ENCODE measurements at regions of chr17 and their contacts with region 1.

Region 1: GRCh38 chr17:3913531-3914311 is 2.5 kb downstream of the P2RX1 start:
- DNase-seq: peak; percentile 93
- ATAC-seq: peak; percentile 57
- H3K4me3 ChIP-seq: peak overlapping the region; percentile 48 to 72 (median 57)
- H3K4me3 Mint-ChIP-seq: peak overlapping the region; percentile 90
- H3K27ac ChIP-seq: peak overlapping the region; percentile 100
- H3K27ac Mint-ChIP-seq: peak overlapping the region; percentile 98
- H3K4me1 ChIP-seq: peaks cover 72 to 92% of the 10 kb centered on the region in 2 donors
- H3K4me1 Mint-ChIP-seq: peaks cover 80% of the 10 kb centered on the region
- H3K27me3 ChIP-seq: no peaks in the 10 kb centered on the region
- H3K27me3 Mint-ChIP-seq: no peaks in the 10 kb centered on the region
- CTCF ChIP-seq: peak; percentile 97

Region 2: DNA sequence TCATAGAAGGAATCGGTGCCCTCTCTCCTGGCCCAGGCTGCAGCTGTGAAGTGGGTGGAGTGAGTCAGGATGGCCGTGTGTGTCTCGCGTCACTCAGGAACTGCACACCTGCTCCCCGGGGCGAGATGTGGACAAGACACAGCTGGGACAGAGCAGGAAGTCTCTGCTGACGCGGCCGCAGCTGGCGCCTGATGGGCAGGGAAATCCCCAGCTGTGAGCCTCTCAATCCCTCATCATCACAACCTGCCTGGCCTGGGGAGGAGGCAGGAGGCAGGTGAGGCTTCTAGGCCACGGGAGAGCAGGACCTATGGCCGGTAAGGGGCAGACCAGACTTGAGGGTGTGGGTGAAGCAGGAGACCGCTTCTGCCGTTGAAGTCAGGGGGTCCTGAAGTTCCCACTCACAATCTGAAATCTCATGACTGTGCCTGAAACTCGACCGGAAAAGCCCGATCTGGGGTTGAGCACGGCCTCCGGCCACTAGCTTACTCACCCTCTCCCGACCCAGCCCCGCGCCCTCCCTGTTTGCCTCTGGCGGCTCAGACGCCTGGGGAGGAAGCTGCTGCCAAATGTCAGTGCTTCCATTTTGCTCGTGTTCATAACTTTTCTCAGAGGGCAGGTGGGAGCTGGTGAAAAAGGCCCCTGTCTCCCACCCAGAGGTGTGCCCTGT is 355.0 kb before region 1 on chr17:
- CTCF ChIA-PET with region 1: no interaction called
- POLR2A ChIA-PET with region 1: no interaction called
- intact Hi-C with region 1: loop called (anchors 10 kb)
- DNase-seq: peak; percentile 89
- ATAC-seq: peak; percentile 76
- H3K4me3 ChIP-seq: no peak overlapping the region
- H3K4me3 Mint-ChIP-seq: peak overlapping the region; percentile 77
- H3K27ac ChIP-seq: peak overlapping the region; percentile 73 to 81
- H3K27ac Mint-ChIP-seq: peak overlapping the region; percentile 95
- H3K4me1 ChIP-seq: peaks cover 28 to 40% of the 10 kb centered on the region in 2 donors
- H3K4me1 Mint-ChIP-seq: peaks cover 46% of the 10 kb centered on the region
- H3K27me3 ChIP-seq: peaks cover 0 to 9% (median 0%) of the 10 kb centered on the region in 4 experiments
- H3K27me3 Mint-ChIP-seq: peaks cover 3% of the 10 kb centered on the region
- CTCF ChIP-seq: no peak

Region 3: GRCh38 chr17:3762922-3763776 is 150.6 kb before region 1 on chr17:
- CTCF ChIA-PET with region 1: no interaction called
- POLR2A ChIA-PET with region 1: no interaction called
- intact Hi-C with region 1: loop called (anchors 1 kb)
- DNase-seq: no peak
- ATAC-seq: peak; percentile 43
- H3K4me3 ChIP-seq: no peak overlapping the region
- H3K4me3 Mint-ChIP-seq: peak overlapping the region; percentile 59
- H3K27ac ChIP-seq: no peak overlapping the region
- H3K27ac Mint-ChIP-seq: peak overlapping the region; percentile 88
- H3K4me1 ChIP-seq: peaks cover 10 to 22% of the 10 kb centered on the region in 2 donors
- H3K4me1 Mint-ChIP-seq: peaks cover 20% of the 10 kb centered on the region
- H3K27me3 ChIP-seq: no peaks in the 10 kb centered on the region
- H3K27me3 Mint-ChIP-seq: no peaks in the 10 kb centered on the region
- CTCF ChIP-seq: no peak

Region 4: GRCh38 chr17:3865176-3865575 is 48.5 kb before region 1 on chr17:
- CTCF ChIA-PET with region 1: interaction called, 53 read pairs
- POLR2A ChIA-PET with region 1: interaction called, 3 read pairs
- intact Hi-C with region 1: loop called (anchors 2 kb)
- DNase-seq: no peak
- ATAC-seq: no peak
- H3K4me3 ChIP-seq: no peak overlapping the region
- H3K4me3 Mint-ChIP-seq: no peak overlapping the region
- H3K27ac ChIP-seq: no peak overlapping the region
- H3K27ac Mint-ChIP-seq: no peak overlapping the region
- H3K4me1 ChIP-seq: no peaks in the 10 kb centered on the region
- H3K4me1 Mint-ChIP-seq: no peaks in the 10 kb centered on the region
- H3K27me3 ChIP-seq: no peaks in the 10 kb centered on the region
- H3K27me3 Mint-ChIP-seq: no peaks in the 10 kb centered on the region
- CTCF ChIP-seq: no peak

Region 5: GRCh38 chr17:3935140-3935542 is 21.4 kb after region 1 on chr17:
- CTCF ChIA-PET with region 1: interaction called, 29 read pairs
- POLR2A ChIA-PET with region 1: interaction called, 10 read pairs
- intact Hi-C with region 1: no loop called
- DNase-seq: peak; percentile 72
- ATAC-seq: peak; percentile 61
- H3K4me3 ChIP-seq: no peak overlapping the region
- H3K4me3 Mint-ChIP-seq: no peak overlapping the region
- H3K27ac ChIP-seq: peak overlapping the region in 1 of 2 donors; percentile 30
- H3K27ac Mint-ChIP-seq: peak overlapping the region; percentile 61
- H3K4me1 ChIP-seq: no peaks in the 10 kb centered on the region
- H3K4me1 Mint-ChIP-seq: no peaks in the 10 kb centered on the region
- H3K27me3 ChIP-seq: no peaks in the 10 kb centered on the region
- H3K27me3 Mint-ChIP-seq: no peaks in the 10 kb centered on the region
- CTCF ChIP-seq: peak; percentile 57

Region 6: DNA sequence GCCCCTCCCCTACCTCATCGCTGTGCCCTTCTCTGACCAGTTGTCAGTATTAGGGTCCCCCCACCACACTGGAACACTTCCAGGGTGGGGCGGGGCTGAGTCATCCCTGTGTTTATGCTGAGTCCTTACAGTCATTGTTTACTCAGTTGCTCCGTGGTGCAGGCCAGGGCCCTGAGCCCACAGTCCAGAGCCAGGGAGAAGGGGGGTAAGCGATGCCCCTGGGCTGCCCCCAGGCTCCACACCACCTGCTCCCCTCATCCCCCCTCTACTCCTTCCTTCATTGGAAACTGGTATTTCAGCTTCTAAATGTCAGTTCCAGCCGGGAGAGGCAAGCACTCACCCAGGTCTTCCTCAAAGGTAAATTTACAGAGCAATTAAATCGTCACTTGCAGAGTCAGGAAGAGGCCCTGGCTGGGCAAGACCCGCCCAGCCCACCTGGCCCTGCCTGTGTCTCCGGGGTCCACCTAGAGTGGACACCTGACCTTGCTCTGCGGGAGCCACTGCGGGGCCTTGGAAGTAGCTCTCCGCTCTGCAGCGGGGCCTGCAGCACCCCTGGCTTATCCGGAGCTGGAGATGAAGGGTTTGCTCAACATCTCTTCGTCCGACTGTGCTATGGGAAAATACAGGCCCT is 45.7 kb after region 1 on chr17:
- CTCF ChIA-PET with region 1: interaction called, 157 read pairs
- POLR2A ChIA-PET with region 1: interaction called, 64 read pairs
- intact Hi-C with region 1: loop called (anchors 1 kb)
- DNase-seq: no peak
- ATAC-seq: no peak
- H3K4me3 ChIP-seq: no peak overlapping the region
- H3K4me3 Mint-ChIP-seq: peak overlapping the region; percentile 98
- H3K27ac ChIP-seq: peak overlapping the region; percentile 25 to 81
- H3K27ac Mint-ChIP-seq: peak overlapping the region; percentile 96
- H3K4me1 ChIP-seq: peaks cover 55 to 82% of the 10 kb centered on the region in 2 donors
- H3K4me1 Mint-ChIP-seq: peaks cover 66% of the 10 kb centered on the region
- H3K27me3 ChIP-seq: no peaks in the 10 kb centered on the region
- H3K27me3 Mint-ChIP-seq: no peaks in the 10 kb centered on the region
- CTCF ChIP-seq: no peak

Region 7: DNA sequence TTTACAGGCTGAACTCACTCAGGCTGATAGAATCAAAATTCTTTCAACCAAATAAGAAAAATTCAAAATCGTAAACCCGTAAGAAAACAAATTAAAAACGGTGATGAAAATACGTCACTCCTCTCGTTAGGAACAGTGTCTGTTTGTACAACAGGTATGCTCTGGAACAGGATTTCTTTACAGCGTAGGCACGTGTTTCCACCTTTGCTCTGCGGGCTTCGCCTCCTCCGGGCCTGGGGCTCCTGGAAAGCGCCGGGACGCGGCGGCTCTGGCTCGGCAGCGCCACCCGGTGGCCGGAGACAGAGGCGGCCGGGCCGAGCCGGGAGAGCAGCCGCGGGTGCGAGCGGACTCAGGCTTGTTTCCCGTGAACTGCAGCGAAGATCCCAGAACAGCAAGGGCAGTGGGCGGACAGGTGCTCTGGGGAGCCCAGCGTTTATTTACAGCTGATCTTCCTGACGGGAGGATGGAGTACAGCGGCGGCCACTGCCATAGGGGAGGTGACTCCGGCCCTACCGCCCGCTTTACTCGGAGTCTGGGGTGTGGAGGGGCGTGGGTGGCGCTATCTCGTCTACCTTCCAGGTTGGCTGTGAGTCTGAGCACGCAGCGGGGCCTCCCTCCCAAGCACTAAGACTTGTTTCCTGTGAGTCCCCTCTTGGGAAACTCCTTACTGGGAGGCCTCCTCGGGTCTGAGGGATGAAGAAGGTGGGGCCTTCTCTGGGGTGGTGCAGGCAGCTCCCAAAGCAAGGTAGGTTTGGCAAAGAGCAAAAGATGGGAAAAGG is 91.0 kb after region 1 on chr17:
- CTCF ChIA-PET with region 1: interaction called, 86 read pairs
- POLR2A ChIA-PET with region 1: interaction called, 3 read pairs
- intact Hi-C with region 1: loop called (anchors 1 kb)
- DNase-seq: peak; percentile 80
- ATAC-seq: peak; percentile 71
- H3K4me3 ChIP-seq: no peak overlapping the region
- H3K4me3 Mint-ChIP-seq: peak overlapping the region; percentile 20
- H3K27ac ChIP-seq: no peak overlapping the region
- H3K27ac Mint-ChIP-seq: no peak overlapping the region
- H3K4me1 ChIP-seq: peaks cover 16 to 35% of the 10 kb centered on the region in 2 donors
- H3K4me1 Mint-ChIP-seq: peaks cover 27% of the 10 kb centered on the region
- H3K27me3 ChIP-seq: no peaks in the 10 kb centered on the region
- H3K27me3 Mint-ChIP-seq: no peaks in the 10 kb centered on the region
- CTCF ChIP-seq: peak; percentile 98

Region 8: DNA sequence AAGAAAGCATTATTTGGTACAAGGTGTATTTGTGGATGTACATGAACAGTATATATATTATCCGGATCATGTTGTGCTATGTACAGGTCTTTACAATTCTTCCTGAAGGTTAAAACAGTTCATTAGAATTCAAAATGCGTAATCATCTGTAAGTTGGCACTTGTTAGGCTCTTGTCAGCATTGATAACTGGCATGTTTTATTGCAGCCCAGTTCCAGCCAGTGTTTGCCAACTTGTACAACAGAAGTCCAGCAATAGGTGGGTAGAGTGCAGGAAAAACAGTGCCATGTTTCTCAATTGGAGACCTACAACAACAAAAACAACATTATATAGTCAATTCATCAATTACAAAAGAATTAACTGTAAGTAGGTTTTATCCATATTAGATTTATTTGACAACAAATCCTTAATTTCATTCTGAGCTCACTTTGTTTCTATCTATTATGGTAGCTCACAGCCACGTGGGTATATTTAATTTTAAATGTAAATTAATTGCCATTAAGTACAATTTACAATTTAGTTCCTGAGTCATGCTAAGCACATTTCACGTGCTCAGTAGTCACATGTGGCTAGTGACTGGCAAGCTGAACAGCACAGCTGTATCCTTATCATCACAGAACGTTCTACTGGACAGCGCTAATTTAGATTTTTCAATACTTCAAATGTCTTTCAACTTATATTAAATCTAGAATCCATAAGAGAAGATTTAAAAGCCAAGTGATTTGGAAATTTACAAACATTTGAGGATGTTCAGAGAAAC is 358.7 kb after region 1 on chr17:
- CTCF ChIA-PET with region 1: no interaction called
- POLR2A ChIA-PET with region 1: no interaction called
- intact Hi-C with region 1: no loop called
- DNase-seq: no peak
- ATAC-seq: no peak
- H3K4me3 ChIP-seq: no peak overlapping the region
- H3K4me3 Mint-ChIP-seq: no peak overlapping the region
- H3K27ac ChIP-seq: no peak overlapping the region
- H3K27ac Mint-ChIP-seq: no peak overlapping the region
- H3K4me1 ChIP-seq: no peaks in the 10 kb centered on the region
- H3K4me1 Mint-ChIP-seq: no peaks in the 10 kb centered on the region
- H3K27me3 ChIP-seq: no peaks in the 10 kb centered on the region
- H3K27me3 Mint-ChIP-seq: no peaks in the 10 kb centered on the region
- CTCF ChIP-seq: no peak

Measured in B cell (primary cell).